ENCODE measurements at regions of chr18 and their contacts with region 1.

Region 1: DNA sequence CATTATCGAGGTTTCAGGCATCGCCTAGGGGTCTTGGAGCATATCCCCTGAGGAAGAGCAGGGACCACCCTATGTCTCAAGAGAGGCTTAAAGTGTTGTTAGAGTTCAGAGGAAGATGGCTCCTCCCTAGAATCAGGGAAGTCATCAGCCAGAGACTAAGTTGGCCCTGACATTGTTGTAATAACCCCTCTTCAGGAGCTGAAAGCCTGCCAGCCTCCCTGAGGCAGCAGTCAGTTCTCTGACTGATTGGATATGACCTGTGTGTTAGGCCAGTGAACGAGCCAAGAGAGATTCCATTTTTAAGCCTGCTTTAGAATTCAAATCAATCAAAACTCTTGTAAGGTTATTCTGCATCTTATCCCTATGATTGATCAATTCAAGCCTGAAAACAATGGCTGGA is 34.9 kb downstream of the ARHGAP28 start:
- DNase-seq: no peak
- H3K4me3 ChIP-seq: no peak overlapping the region
- H3K27ac ChIP-seq: no peak overlapping the region
- H3K4me1 ChIP-seq: no peaks in the 10 kb centered on the region
- H3K27me3 ChIP-seq: no peaks in the 10 kb centered on the region
- CTCF ChIP-seq: no peak
- EP300 ChIP-seq: no peak
- POLR2A ChIP-seq: no peak

Region 2: DNA sequence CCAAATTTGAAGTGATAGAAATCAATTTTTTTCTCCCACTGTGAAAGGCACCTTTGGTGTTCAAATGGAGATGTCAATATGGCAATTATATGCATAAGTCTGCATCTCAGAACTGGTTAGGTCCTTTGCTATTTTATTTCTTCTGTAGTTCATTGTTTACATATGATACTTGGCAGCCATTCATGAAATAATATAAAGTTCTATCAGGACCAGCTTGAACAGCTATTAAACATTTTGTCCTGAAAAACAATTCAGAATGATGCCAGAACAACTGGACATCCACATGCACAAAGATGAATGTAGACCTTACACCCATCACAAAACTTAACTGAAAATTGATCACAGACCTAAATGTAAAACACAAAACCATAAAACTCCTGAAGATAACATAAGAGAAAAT is 76.7 kb before region 1 on chr18:
- intact Hi-C with region 1: loop called (anchors 10 kb)
- DNase-seq: no peak
- H3K4me3 ChIP-seq: no peak overlapping the region
- H3K27ac ChIP-seq: no peak overlapping the region
- H3K4me1 ChIP-seq: peaks cover 0 to 5% (median 2%) of the 10 kb centered on the region in 4 donors
- H3K27me3 ChIP-seq: peaks cover 0 to 6% (median 0%) of the 10 kb centered on the region in 4 donors
- CTCF ChIP-seq: no peak
- EP300 ChIP-seq: no peak
- POLR2A ChIP-seq: no peak

Region 3: GRCh38 chr18:6835345-6835744 is 71.0 kb after region 1 on chr18:
- intact Hi-C with region 1: no loop called
- DNase-seq: no peak
- H3K4me3 ChIP-seq: no peak overlapping the region
- H3K27ac ChIP-seq: no peak overlapping the region
- H3K4me1 ChIP-seq: no peaks in the 10 kb centered on the region
- H3K27me3 ChIP-seq: no peaks in the 10 kb centered on the region
- CTCF ChIP-seq: no peak
- EP300 ChIP-seq: no peak
- POLR2A ChIP-seq: no peak

Region 4: GRCh38 chr18:7413906-7414305 is 649.5 kb after region 1 on chr18:
- intact Hi-C with region 1: no loop called
- DNase-seq: no peak
- H3K4me3 ChIP-seq: no peak overlapping the region
- H3K27ac ChIP-seq: peak overlapping the region in 3 of 4 donors; percentile 33 to 57 (median 48)
- H3K4me1 ChIP-seq: peaks cover 9 to 20% (median 12%) of the 10 kb centered on the region in 4 donors
- H3K27me3 ChIP-seq: no peaks in the 10 kb centered on the region
- CTCF ChIP-seq: no peak
- EP300 ChIP-seq: no peak
- POLR2A ChIP-seq: no peak

Measured in esophagus muscularis mucosa (tissue), 4 donors.